K562 (cell line): ENCODE measurements at regions of chr19 and their contacts with region 1.

Region 1: GRCh38 chr19:38634757-38635482 is 12.5 kb upstream of the ACTN4 start:
- DNase-seq: peak; percentile 74 to 82 (median 76)
- ATAC-seq: peak; percentile 62
- H3K4me3 ChIP-seq: no peak overlapping the region
- H3K27ac ChIP-seq: no peak overlapping the region
- H3K4me1 ChIP-seq: peaks cover 14 to 37% of the 10 kb centered on the region in 2 experiments; a peak in 4 of 5 replicates
- H3K27me3 ChIP-seq: no peaks in the 10 kb centered on the region
- CTCF ChIP-seq: peak; percentile 84 to 93 (median 90)
- EP300 ChIP-seq: no peak
- POLR2A ChIP-seq: peak; percentile 54; the same call in 1 of the 2 replicates
- RAD21 ChIP-seq: peak; percentile 77 to 82; a peak in 3 of 4 replicates

Region 2: DNA sequence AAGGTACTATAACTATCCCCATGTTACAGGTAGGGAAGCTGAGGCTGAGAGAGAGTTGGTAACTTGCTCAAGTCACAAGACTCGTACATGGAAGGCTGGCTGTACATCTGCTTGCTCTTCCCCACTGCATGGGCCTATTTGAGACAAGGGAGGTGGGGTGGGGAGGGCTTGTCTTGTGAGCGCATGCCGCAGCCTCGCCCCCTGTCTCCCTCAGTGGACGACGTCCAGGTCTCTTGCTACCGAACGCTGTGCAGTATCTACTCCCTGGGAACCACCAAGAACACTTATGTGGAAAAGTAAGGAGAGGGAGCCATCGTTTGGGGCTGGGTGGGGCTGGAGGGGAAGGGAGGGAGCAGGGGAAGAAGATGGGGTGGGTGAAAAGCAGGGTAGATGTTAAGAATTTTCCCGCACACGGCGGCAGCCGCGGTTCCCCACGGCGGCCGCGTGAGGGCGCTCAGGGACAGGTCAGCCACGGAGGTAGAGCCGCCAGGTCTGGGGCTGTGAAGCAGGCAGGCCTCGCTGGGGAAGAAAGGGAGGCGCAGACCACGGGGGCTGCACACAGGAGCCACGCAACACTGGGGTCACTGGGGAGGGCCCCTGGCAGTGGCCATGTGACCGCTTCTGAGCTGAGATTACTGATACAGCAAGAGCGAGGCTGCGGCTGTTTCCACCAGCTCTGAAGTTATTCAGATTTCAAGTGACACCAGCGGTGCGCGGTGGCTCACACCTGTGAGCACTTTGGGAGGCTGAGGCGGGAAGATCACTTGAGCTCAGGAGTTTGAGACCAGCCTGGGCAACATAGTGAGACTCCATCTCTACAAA is 119.9 kb before region 1 on chr19:
- CTCF ChIA-PET with region 1: interaction called, 9 read pairs
- POLR2A ChIA-PET with region 1: no interaction called
- in situ Hi-C with region 1: no loop called
- intact Hi-C with region 1: loop called (anchors 10 kb)
- DNase-seq: peak; percentile 84 to 87 (median 86)
- ATAC-seq: peak; percentile 98
- H3K4me3 ChIP-seq: no peak overlapping the region
- H3K27ac ChIP-seq: no peak overlapping the region
- H3K4me1 ChIP-seq: peaks cover 6 to 27% of the 10 kb centered on the region in 2 experiments; a peak in 4 of 5 replicates
- H3K27me3 ChIP-seq: no peaks in the 10 kb centered on the region
- CTCF ChIP-seq: peak; percentile 86 to 93 (median 90)
- EP300 ChIP-seq: no peak
- POLR2A ChIP-seq: no peak
- RAD21 ChIP-seq: peak; percentile 88 to 92

Region 3: DNA sequence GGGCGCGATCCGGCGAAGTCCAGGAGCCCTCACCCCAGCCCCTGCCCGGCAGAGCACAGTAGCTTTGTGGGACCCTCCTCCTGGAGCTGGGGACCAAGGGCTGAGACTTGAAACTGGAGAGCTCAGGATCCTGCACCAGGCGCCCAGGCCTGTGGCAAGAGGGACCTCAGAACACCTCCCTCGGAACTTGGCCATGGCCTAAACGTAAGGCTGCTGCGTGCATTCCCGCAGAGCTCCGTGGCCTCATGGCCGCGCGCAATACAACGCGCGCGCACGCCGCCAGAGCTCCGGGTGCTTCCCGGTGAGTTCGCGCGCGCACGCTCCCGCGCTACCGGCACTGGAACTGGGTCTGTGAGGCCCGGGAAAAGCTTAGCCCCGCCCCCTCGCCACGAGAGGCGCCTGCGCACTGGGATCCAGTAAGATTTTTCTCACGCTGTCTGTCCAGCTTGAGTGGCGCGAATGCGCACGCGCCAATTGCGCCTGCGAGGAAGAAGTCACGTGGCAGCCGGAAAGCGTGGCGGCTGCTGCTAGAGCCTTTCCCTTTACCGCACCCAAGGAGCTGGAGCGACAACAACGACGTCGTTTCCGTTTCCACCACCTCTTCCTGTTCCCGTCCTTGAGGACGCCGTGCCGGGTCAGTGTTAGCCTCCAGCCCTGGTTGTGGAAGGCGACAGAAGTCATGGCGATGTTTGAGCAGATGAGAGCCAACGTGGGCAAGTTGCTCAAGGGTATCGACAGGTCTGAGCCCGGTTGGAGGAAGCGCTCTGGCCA is 16.1 kb before region 1 on chr19 and contains the start of gene EIF3K:
- CTCF ChIA-PET with region 1: no interaction called
- POLR2A ChIA-PET with region 1: interaction called, 13 read pairs
- in situ Hi-C with region 1: no loop called
- intact Hi-C with region 1: no loop called
- DNase-seq: peak; percentile 98 to 99 (median 98)
- ATAC-seq: peak; percentile 92
- H3K4me3 ChIP-seq: peak within 1 kb of the TSS; percentile 93
- H3K27ac ChIP-seq: peak within 1 kb of the TSS; percentile 94
- H3K4me1 ChIP-seq: peaks cover 13 to 29% of the 10 kb centered on the region in 2 experiments; a peak in 4 of 5 replicates
- H3K27me3 ChIP-seq: no peaks in the 10 kb centered on the region
- CTCF ChIP-seq: no peak
- EP300 ChIP-seq: no peak
- POLR2A ChIP-seq: peak; percentile 98
- RAD21 ChIP-seq: 0 out of 4 replicates have a peak, but pooled peaks of 1 of the 2 experiments have one; percentile 8
- polyA plus RNA-seq, gene EIF3K: 1,193 to 1,486 TPM

Region 4: DNA sequence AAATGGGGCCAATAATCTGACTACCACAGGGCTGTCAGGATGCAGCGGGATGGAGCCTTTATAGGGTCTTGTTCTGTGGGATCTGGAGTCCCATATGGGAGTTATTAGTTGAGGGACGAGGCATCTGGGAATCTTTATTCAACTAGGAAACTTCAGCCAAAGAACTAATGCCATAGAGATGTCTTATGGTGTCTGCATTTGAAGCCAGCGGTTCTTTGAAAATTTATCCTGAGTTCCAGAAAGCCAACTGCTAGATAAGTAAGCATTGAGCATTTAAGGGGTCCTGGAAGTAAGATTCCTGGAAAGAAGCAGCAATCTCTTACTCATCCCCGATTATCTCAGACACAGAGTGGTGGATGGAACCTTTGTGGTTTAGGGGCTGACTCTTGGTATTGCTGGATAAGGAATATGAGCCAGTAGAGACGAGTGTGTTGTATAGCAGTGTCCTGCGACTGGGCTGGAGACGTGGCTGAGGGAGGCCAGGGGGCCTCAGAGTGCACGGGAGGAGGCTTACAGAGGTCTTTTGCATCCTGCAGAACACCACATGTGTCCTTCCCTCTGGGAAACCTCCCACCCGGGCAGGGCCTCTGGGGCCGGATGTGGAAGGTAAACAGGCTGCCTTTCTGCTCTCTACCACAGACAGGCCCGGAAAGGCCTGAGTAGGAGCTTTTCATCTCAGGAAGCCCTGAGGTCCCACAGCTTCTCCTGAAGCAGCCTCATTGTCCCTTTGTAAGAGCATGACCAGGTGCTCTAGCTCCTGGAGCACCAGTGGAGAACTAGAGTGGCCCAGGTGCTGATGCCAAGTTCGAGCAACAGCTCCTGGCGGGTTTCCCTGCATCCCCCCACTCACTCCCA is 41.3 kb after region 1 on chr19:
- CTCF ChIA-PET with region 1: no interaction called
- POLR2A ChIA-PET with region 1: interaction called, 3 read pairs
- in situ Hi-C with region 1: no loop called
- intact Hi-C with region 1: loop called (anchors 5 kb)
- DNase-seq: peak; percentile 62 to 96 (median 83)
- ATAC-seq: peak; percentile 90
- H3K4me3 ChIP-seq: no peak overlapping the region; the same call in 1 of the 2 replicates
- H3K27ac ChIP-seq: peak overlapping the region; percentile 89
- H3K4me1 ChIP-seq: peaks cover 53 to 79% of the 10 kb centered on the region in 2 experiments
- H3K27me3 ChIP-seq: no peaks in the 10 kb centered on the region
- CTCF ChIP-seq: peak; percentile 30 to 42 (median 32); a peak in 3 of 6 replicates
- EP300 ChIP-seq: peak; percentile 99
- POLR2A ChIP-seq: no peak
- RAD21 ChIP-seq: peak in 1 of 2 experiments; percentile 57; a peak in 3 of 4 replicates